ENCODE measurements at regions of chr9 and their contacts with region 1.

Region 1: DNA sequence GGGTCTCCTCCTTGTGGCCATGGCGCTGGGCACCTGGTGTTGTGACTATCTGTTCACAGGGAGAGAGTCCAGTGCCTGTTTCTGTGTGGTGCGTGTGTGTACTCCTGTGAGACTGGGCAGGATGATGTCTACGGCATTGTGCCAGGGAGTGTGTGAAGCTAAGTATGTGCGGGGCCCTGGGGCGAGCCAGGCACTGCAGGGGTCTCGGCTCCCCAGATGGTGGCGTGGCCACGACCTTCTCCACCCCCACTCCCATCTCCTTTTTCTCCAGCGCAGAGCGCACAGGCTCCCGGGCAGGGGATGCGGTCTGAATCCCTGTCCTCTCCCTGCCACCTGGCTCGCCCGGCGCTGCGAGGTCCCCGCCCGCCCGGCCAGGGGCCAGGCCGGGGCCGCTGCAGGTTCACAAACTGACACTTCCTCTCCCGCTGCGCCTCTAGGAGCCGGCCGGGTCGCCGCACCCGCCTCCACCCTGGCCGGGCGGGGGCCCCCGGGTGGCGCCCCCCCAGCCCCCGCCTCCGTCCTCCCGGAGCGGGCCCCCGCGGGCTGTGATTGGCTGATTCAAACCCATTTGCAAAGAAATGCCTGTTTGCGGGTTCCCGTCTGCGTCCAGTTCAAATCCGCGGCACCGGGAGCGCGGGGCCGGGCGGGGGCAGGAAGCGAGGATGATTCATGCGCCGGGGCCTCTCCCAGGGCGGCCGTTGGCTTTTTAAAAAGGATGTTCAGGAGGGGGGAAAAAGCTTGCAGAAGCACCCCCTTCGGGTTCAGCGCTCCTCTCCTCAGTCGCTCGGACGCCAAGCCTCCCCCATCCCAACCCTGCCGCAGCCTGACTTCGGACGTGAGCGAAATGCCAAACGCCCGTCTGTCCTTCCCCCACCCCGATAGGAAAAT is 790 bp downstream of the PHF19 start:
- DNase-seq: peak; percentile 93
- H3K4me3 Mint-ChIP-seq: peak overlapping the region; percentile 90
- H3K27ac Mint-ChIP-seq: peak overlapping the region; percentile 96
- H3K4me1 Mint-ChIP-seq: peaks cover 82% of the 10 kb centered on the region
- H3K27me3 Mint-ChIP-seq: no peaks in the 10 kb centered on the region

Region 2: GRCh38 chr9:120715389-120715924 is 160.7 kb before region 1 on chr9:
- CTCF ChIA-PET with region 1: no interaction called
- POLR2A ChIA-PET with region 1: no interaction called
- DNase-seq: no peak
- H3K4me3 Mint-ChIP-seq: peak overlapping the region; percentile 81
- H3K27ac Mint-ChIP-seq: peak overlapping the region; percentile 89
- H3K4me1 Mint-ChIP-seq: peaks cover 36% of the 10 kb centered on the region
- H3K27me3 Mint-ChIP-seq: no peaks in the 10 kb centered on the region

Region 3: GRCh38 chr9:120862452-120862851 is 13.7 kb before region 1 on chr9:
- CTCF ChIA-PET with region 1: no interaction called
- POLR2A ChIA-PET with region 1: no interaction called
- DNase-seq: no peak
- H3K4me3 Mint-ChIP-seq: no peak overlapping the region
- H3K27ac Mint-ChIP-seq: no peak overlapping the region
- H3K4me1 Mint-ChIP-seq: peaks cover 20% of the 10 kb centered on the region
- H3K27me3 Mint-ChIP-seq: no peaks in the 10 kb centered on the region

Region 4: DNA sequence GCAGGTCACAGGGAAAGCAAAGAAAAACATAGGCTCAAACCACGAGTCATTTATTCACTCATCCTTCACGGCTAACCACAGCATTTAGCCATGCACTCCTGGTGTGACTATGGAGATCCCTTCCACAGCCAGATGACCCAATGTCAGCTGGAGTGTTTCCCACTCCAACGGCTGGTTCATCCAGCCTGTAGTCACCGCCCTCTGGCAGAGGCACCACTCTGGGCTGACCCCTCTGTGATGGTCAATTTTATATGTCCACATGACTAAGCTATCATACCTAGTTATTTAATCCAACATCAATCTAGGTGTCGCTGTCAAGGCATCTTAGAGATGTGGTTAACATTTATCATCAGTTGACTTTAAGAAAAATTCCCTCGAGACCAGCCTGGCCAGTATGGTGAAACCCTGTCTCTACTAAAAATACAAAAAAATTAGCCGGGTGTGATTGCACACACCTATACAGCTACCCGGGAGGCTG is 10.3 kb after region 1 on chr9:
- CTCF ChIA-PET with region 1: interaction called, 18 read pairs
- POLR2A ChIA-PET with region 1: interaction called, 11 read pairs
- DNase-seq: no peak
- H3K4me3 Mint-ChIP-seq: no peak overlapping the region
- H3K27ac Mint-ChIP-seq: peak overlapping the region; percentile 69
- H3K4me1 Mint-ChIP-seq: peaks cover 84% of the 10 kb centered on the region
- H3K27me3 Mint-ChIP-seq: no peaks in the 10 kb centered on the region

Region 5: GRCh38 chr9:120892748-120893610 is 16.8 kb after region 1 on chr9:
- CTCF ChIA-PET with region 1: interaction called, 18 read pairs
- POLR2A ChIA-PET with region 1: interaction called, 11 read pairs
- DNase-seq: peak; percentile 77
- H3K4me3 Mint-ChIP-seq: peak overlapping the region; percentile 62
- H3K27ac Mint-ChIP-seq: peak overlapping the region; percentile 99
- H3K4me1 Mint-ChIP-seq: peaks cover 91% of the 10 kb centered on the region
- H3K27me3 Mint-ChIP-seq: no peaks in the 10 kb centered on the region